OCI-LY7 (cell line): ENCODE measurements at regions of chr2 and their contacts with region 1.

Region 1: GRCh38 chr2:104872866-104873688 is 19.2 kb downstream of the POU3F3 start:
- DNase-seq: peak; percentile 77
- H3K4me3 ChIP-seq: peak overlapping the region; percentile 68
- H3K27ac ChIP-seq: no peak overlapping the region
- H3K4me1 ChIP-seq: peaks cover 11% of the 10 kb centered on the region
- CTCF ChIP-seq: peak; percentile 82

Region 2: DNA sequence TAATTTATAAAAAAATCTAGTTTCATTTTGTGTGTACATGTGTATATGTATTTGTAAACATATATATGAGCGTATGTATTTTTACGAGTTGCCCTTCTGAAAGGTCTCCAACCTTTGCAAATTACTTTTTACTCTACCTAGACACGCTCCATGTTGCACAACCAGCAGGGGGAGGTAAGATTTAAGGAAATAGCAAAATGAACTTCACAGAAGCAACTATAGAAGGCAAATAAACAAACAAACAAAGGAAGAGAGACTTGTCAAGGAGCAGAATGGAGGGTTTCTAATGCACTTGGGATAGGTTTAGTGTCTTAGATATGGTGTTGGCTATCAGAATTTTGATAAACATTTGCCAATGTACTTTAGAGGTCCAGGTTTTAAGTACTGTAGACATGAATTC is 839.7 kb before region 1 on chr2:
- CTCF ChIA-PET with region 1: no interaction called
- POLR2A ChIA-PET with region 1: interaction called, 3 read pairs
- intact Hi-C with region 1: loop called (anchors 5 kb)
- DNase-seq: peak; percentile 35
- H3K4me3 ChIP-seq: no peak overlapping the region
- H3K27ac ChIP-seq: no peak overlapping the region
- H3K4me1 ChIP-seq: no peaks in the 10 kb centered on the region
- CTCF ChIP-seq: peak; percentile 82

Region 3: GRCh38 chr2:104412384-104412783 is 460.7 kb before region 1 on chr2:
- CTCF ChIA-PET with region 1: no interaction called
- POLR2A ChIA-PET with region 1: no interaction called
- intact Hi-C with region 1: loop called (anchors 10 kb)
- DNase-seq: peak; percentile 45
- H3K4me3 ChIP-seq: no peak overlapping the region
- H3K27ac ChIP-seq: no peak overlapping the region
- H3K4me1 ChIP-seq: no peaks in the 10 kb centered on the region
- CTCF ChIP-seq: peak; percentile 86

Region 4: GRCh38 chr2:104733544-104733943 is 139.5 kb before region 1 on chr2:
- CTCF ChIA-PET with region 1: no interaction called
- POLR2A ChIA-PET with region 1: no interaction called
- intact Hi-C with region 1: loop called (anchors 10 kb)
- DNase-seq: peak; percentile 52
- H3K4me3 ChIP-seq: no peak overlapping the region
- H3K27ac ChIP-seq: no peak overlapping the region
- H3K4me1 ChIP-seq: no peaks in the 10 kb centered on the region
- CTCF ChIP-seq: peak; percentile 74

Region 5: DNA sequence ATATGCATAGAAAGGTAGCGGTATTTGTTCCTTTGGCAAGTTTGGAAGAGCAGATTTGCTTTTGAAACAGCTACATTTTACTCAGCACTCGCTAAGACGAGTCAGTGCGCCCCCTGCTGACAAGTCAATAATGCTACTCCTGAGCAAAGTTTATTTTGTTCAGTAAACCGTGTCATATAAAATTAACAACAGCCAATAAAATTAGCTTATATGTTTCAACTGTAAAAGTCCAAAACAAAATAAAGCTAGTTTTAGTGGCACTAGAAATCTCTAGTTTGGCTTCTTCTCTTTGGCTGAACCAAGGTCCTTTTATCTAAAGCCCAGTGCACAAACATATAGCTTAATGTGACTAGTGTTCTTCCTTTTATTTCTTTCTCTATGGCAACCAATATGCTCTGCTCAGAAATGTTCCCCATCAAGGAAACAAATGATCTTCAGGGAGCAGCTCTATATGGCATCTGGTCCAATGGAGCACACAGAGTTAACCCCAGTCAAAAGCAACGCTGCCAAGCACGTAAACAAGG is 23.4 kb before region 1 on chr2:
- CTCF ChIA-PET with region 1: no interaction called
- POLR2A ChIA-PET with region 1: no interaction called
- intact Hi-C with region 1: loop called (anchors 2 kb)
- DNase-seq: peak; percentile 74
- H3K4me3 ChIP-seq: no peak overlapping the region
- H3K27ac ChIP-seq: no peak overlapping the region
- H3K4me1 ChIP-seq: peaks cover 15% of the 10 kb centered on the region
- CTCF ChIP-seq: peak; percentile 91

Region 6: GRCh38 chr2:104889291-104889959 is 16.3 kb after region 1 on chr2:
- CTCF ChIA-PET with region 1: no interaction called
- POLR2A ChIA-PET with region 1: interaction called, 10 read pairs
- intact Hi-C with region 1: no loop called
- DNase-seq: peak; percentile 34
- H3K4me3 ChIP-seq: no peak overlapping the region
- H3K27ac ChIP-seq: no peak overlapping the region
- H3K4me1 ChIP-seq: peaks cover 16% of the 10 kb centered on the region
- CTCF ChIP-seq: no peak

Region 7: GRCh38 chr2:104901037-104901851 is 28.2 kb after region 1 on chr2:
- CTCF ChIA-PET with region 1: no interaction called
- POLR2A ChIA-PET with region 1: no interaction called
- intact Hi-C with region 1: no loop called
- DNase-seq: no peak
- H3K4me3 ChIP-seq: no peak overlapping the region
- H3K27ac ChIP-seq: no peak overlapping the region
- H3K4me1 ChIP-seq: no peaks in the 10 kb centered on the region
- CTCF ChIP-seq: no peak

Region 8: DNA sequence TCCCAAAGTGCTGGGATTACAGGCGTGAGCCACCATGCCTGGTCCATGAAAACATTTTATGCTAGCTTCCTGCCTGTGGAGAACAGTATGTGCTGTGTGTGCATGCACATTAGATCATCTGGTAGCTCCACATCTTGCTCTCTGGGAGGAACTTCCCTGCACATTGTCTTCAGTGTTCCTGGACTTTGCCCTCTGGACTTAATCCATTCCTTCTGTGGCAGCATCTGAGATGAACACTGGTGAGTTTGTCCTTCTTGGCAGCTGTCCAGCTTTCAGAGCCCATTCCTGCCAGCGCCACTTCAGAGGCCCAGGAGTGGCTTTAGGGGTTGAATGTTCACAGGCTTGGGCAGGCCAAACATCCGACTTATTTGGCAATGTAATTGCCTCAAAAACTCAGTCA is 46.0 kb after region 1 on chr2:
- CTCF ChIA-PET with region 1: no interaction called
- POLR2A ChIA-PET with region 1: no interaction called
- intact Hi-C with region 1: no loop called
- DNase-seq: no peak
- H3K4me3 ChIP-seq: no peak overlapping the region
- H3K27ac ChIP-seq: no peak overlapping the region
- H3K4me1 ChIP-seq: no peaks in the 10 kb centered on the region
- CTCF ChIP-seq: no peak

Region 9: GRCh38 chr2:104976603-104977120 is 103.6 kb after region 1 on chr2:
- CTCF ChIA-PET with region 1: no interaction called
- POLR2A ChIA-PET with region 1: no interaction called
- intact Hi-C with region 1: loop called (anchors 5 kb)
- DNase-seq: peak; percentile 94
- H3K4me3 ChIP-seq: peak overlapping the region; percentile 59
- H3K27ac ChIP-seq: peak overlapping the region; percentile 96
- H3K4me1 ChIP-seq: peaks cover 33% of the 10 kb centered on the region
- CTCF ChIP-seq: peak; percentile 93